Naive thymus-derived CD4-positive, alpha-beta T cell (primary cell): ENCODE measurements at regions of chr13 and their contacts with region 1.

Region 1: DNA sequence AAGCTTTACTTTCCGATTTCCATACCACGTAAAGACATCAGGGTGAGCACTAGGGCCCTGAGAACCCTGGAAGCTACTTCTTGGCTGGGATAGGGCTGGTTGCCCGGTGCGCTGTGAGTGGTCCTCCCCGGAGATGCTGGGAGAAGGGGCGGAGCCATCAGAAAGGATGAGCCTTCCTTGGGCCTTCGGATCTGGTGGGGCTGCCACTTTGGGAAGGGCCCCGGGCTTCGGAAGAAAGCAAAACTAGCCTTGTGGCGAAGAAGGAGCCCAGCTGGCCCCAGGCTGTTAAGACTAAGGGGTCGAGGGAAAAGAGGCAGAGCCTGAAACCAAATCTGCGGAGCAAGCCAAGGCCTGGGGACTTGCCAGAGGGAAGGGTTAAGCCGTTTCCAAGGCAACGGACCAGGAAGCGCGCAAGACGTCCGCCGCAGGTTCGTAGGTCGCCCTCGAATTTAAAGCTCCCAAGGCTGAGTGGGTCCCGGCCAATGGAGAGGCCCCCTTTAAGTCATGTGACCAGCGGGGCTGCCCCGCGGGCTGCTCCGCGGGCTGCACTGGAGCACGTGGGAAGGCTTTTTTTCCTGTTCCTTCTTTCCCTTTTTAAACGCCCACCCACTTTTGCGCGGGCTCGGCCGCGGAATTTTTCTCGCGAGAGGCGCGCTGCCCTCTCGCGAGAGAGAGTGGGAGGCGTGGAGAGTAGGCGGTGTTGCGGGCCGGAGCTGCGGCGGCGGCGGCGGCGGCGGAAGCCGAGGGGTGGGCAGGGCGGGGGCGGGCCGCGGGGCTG is 426 bp upstream of the AKAP11 start:
- DNase-seq: peak; percentile 87 to 96 (median 93)
- ATAC-seq: peak; percentile 93
- H3K4me3 ChIP-seq: peak overlapping the region; percentile 84
- H3K4me3 Mint-ChIP-seq: peak overlapping the region in 9 of 10 donors; percentile 84 to 98 (median 97)
- H3K27ac ChIP-seq: peak overlapping the region; percentile 93
- H3K27ac Mint-ChIP-seq: peak overlapping the region; percentile 75 to 98 (median 96)
- H3K4me1 ChIP-seq: peaks cover 21 to 22% of the 10 kb centered on the region in 2 donors
- H3K4me1 Mint-ChIP-seq: peaks cover 16 to 55% (median 47%) of the 10 kb centered on the region in 7 donors
- H3K27me3 ChIP-seq: no peaks in the 10 kb centered on the region
- H3K27me3 Mint-ChIP-seq: peaks cover 0 to 5% (median 0%) of the 10 kb centered on the region in 5 donors

Region 2: GRCh38 chr13:40770934-40771618 is 1500.5 kb before region 1 on chr13 and contains the start of gene MRPS31:
- CTCF ChIA-PET with region 1: no interaction called
- POLR2A ChIA-PET with region 1: no interaction called
- intact Hi-C with region 1: loop called in 1 of 2 experiments (anchors 5 kb)
- DNase-seq: peak; percentile 89 to 97 (median 93)
- ATAC-seq: peak; percentile 99
- H3K4me3 ChIP-seq: peak within 1 kb of the TSS; percentile 78
- H3K4me3 Mint-ChIP-seq: peak within 1 kb of the TSS; percentile 94 to 100 (median 99)
- H3K27ac ChIP-seq: peak within 1 kb of the TSS; percentile 89
- H3K27ac Mint-ChIP-seq: peak within 1 kb of the TSS; percentile 93 to 100 (median 98)
- H3K4me1 ChIP-seq: peaks cover 15 to 16% of the 10 kb centered on the region in 2 donors
- H3K4me1 Mint-ChIP-seq: peaks cover 16 to 41% (median 33%) of the 10 kb centered on the region in 7 donors
- H3K27me3 ChIP-seq: no peaks in the 10 kb centered on the region
- H3K27me3 Mint-ChIP-seq: no peaks in the 10 kb centered on the region
- total RNA-seq, gene MRPS31: 15.8 to 39.9 (median 34.7) TPM

Region 3: GRCh38 chr13:41263261-41264027 is 1008.1 kb before region 1 on chr13 and contains the start of gene MTRF1:
- CTCF ChIA-PET with region 1: no interaction called
- POLR2A ChIA-PET with region 1: no interaction called
- intact Hi-C with region 1: loop called (anchors 1 to 5 kb)
- DNase-seq: peak; percentile 70 to 91 (median 88)
- ATAC-seq: peak; percentile 94
- H3K4me3 ChIP-seq: peak within 1 kb of the TSS; percentile 76
- H3K4me3 Mint-ChIP-seq: peak within 1 kb of the TSS; percentile 84 to 100 (median 96)
- H3K27ac ChIP-seq: peak within 1 kb of the TSS; percentile 79
- H3K27ac Mint-ChIP-seq: peak within 1 kb of the TSS; percentile 92 to 99 (median 96)
- H3K4me1 ChIP-seq: peaks cover 0 to 3% of the 10 kb centered on the region in 2 donors
- H3K4me1 Mint-ChIP-seq: peaks cover 10 to 61% (median 28%) of the 10 kb centered on the region in 7 donors
- H3K27me3 ChIP-seq: no peaks in the 10 kb centered on the region
- H3K27me3 Mint-ChIP-seq: no peaks in the 10 kb centered on the region
- total RNA-seq, gene MTRF1: 21.7 to 38.2 (median 30.9) TPM

Region 4: GRCh38 chr13:41916173-41916954 is 355.2 kb before region 1 on chr13:
- CTCF ChIA-PET with region 1: no interaction called
- POLR2A ChIA-PET with region 1: no interaction called
- intact Hi-C with region 1: loop called in 1 of 2 experiments (anchors 10 kb)
- DNase-seq: peak in 5 of 9 donors; percentile 15 to 47 (median 30)
- ATAC-seq: peak; percentile 76
- H3K4me3 ChIP-seq: no peak overlapping the region
- H3K4me3 Mint-ChIP-seq: peak overlapping the region in 9 of 10 donors; percentile 26 to 81 (median 57)
- H3K27ac ChIP-seq: no peak overlapping the region
- H3K27ac Mint-ChIP-seq: peak overlapping the region in 7 of 9 donors; percentile 0 to 87 (median 47)
- H3K4me1 ChIP-seq: peaks cover 11 to 15% of the 10 kb centered on the region in 2 donors
- H3K4me1 Mint-ChIP-seq: peaks cover 26 to 65% (median 44%) of the 10 kb centered on the region in 7 donors
- H3K27me3 ChIP-seq: no peaks in the 10 kb centered on the region
- H3K27me3 Mint-ChIP-seq: no peaks in the 10 kb centered on the region

Region 5: GRCh38 chr13:42260903-42261654 is 10.4 kb before region 1 on chr13:
- CTCF ChIA-PET with region 1: no interaction called
- POLR2A ChIA-PET with region 1: interaction called, 11 read pairs
- intact Hi-C with region 1: no loop called
- DNase-seq: no peak
- ATAC-seq: no peak
- H3K4me3 ChIP-seq: no peak overlapping the region
- H3K4me3 Mint-ChIP-seq: no peak overlapping the region
- H3K27ac ChIP-seq: no peak overlapping the region
- H3K27ac Mint-ChIP-seq: no peak overlapping the region
- H3K4me1 ChIP-seq: peaks cover 0 to 8% of the 10 kb centered on the region in 2 donors
- H3K4me1 Mint-ChIP-seq: peaks cover 3 to 16% (median 10%) of the 10 kb centered on the region in 7 donors
- H3K27me3 ChIP-seq: no peaks in the 10 kb centered on the region
- H3K27me3 Mint-ChIP-seq: peaks cover 4 to 18% (median 4%) of the 10 kb centered on the region in 5 donors

Region 6: GRCh38 chr13:42377640-42378382 is 106.3 kb after region 1 on chr13:
- CTCF ChIA-PET with region 1: no interaction called
- POLR2A ChIA-PET with region 1: interaction called, 5 read pairs
- intact Hi-C with region 1: loop called in 1 of 2 experiments (anchors 1 kb)
- DNase-seq: peak in 2 of 9 donors; percentile 28 to 56
- ATAC-seq: peak; percentile 83
- H3K4me3 ChIP-seq: no peak overlapping the region
- H3K4me3 Mint-ChIP-seq: peak overlapping the region in 5 of 10 donors; percentile 16 to 63 (median 33)
- H3K27ac ChIP-seq: peak overlapping the region; percentile 19
- H3K27ac Mint-ChIP-seq: peak overlapping the region in 6 of 9 donors; percentile 33 to 92 (median 55)
- H3K4me1 ChIP-seq: peaks cover 17 to 18% of the 10 kb centered on the region in 2 donors
- H3K4me1 Mint-ChIP-seq: peaks cover 10 to 61% (median 29%) of the 10 kb centered on the region in 7 donors
- H3K27me3 ChIP-seq: no peaks in the 10 kb centered on the region
- H3K27me3 Mint-ChIP-seq: no peaks in the 10 kb centered on the region

Region 7: GRCh38 chr13:42405665-42406390 is 134.3 kb after region 1 on chr13:
- CTCF ChIA-PET with region 1: no interaction called
- POLR2A ChIA-PET with region 1: no interaction called
- intact Hi-C with region 1: no loop called
- DNase-seq: peak in 1 of 9 donors; percentile 70
- ATAC-seq: peak; percentile 57
- H3K4me3 ChIP-seq: no peak overlapping the region
- H3K4me3 Mint-ChIP-seq: peak overlapping the region in 2 of 10 donors; percentile 3 to 62
- H3K27ac ChIP-seq: no peak overlapping the region
- H3K27ac Mint-ChIP-seq: peak overlapping the region in 1 of 9 donors; percentile 88
- H3K4me1 ChIP-seq: peaks cover 0 to 13% of the 10 kb centered on the region in 2 donors
- H3K4me1 Mint-ChIP-seq: peaks cover 0 to 29% (median 0%) of the 10 kb centered on the region in 7 donors
- H3K27me3 ChIP-seq: no peaks in the 10 kb centered on the region
- H3K27me3 Mint-ChIP-seq: no peaks in the 10 kb centered on the region

Region 8: DNA sequence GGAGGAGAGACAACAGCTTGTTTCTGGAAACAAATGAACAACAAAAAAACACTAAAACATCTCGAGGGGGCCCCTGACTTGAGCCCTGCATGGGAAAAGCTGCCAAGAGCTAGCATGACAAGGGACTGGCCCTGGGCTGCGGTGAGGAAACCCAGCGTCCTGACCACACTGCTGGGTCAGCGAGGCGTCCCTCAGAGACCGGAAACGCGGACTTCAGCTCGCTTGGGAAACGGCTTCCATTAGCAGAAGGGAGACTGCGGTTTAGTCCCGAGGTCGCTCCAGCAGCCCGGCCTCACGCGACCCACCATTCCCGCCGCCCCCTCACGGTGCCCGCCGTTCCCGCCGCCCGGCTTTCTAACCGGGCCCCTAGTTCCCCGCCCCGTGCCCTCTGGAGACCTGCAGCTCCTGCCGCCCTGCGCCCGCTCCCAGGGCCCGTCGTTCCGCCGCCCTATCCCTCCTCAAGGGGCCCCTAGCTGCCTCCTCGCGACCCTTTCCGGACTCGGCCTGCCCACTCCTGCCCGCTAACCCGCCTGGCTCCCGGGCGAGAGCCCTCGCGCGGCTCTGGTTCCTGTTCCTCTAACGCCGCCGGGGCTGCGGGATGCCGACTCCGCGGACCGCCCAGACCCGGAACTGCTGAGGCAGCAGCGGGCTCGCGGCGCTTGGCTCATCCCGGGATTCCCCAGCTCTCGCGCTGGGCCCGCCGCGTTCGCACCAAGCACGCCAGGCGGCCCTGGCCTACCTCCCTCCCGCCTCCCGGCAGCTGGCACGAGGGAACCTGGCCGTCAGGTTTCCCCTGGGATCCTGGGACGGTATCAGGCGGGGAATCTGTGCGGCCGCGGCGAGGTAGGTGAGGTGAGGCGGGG is 1607.6 kb after region 1 on chr13 and contains the start of gene CCDC122:
- CTCF ChIA-PET with region 1: no interaction called
- POLR2A ChIA-PET with region 1: no interaction called
- intact Hi-C with region 1: loop called in 1 of 2 experiments (anchors 10 kb)
- DNase-seq: peak; percentile 44 to 81 (median 65)
- ATAC-seq: peak; percentile 91
- H3K4me3 ChIP-seq: peak within 1 kb of the TSS; percentile 60
- H3K4me3 Mint-ChIP-seq: peak within 1 kb of the TSS; percentile 82 to 93 (median 90)
- H3K27ac ChIP-seq: peak within 1 kb of the TSS; percentile 72
- H3K27ac Mint-ChIP-seq: peak within 1 kb of the TSS; percentile 53 to 90 (median 81)
- H3K4me1 ChIP-seq: peaks cover 0 to 9% of the 10 kb centered on the region in 2 donors
- H3K4me1 Mint-ChIP-seq: peaks cover 15 to 27% (median 23%) of the 10 kb centered on the region in 7 donors
- H3K27me3 ChIP-seq: no peaks in the 10 kb centered on the region
- H3K27me3 Mint-ChIP-seq: peaks cover 0 to 33% (median 3%) of the 10 kb centered on the region in 5 donors
- total RNA-seq, gene CCDC122: 1.1 to 2.3 (median 1.4) TPM